Heart left ventricle (tissue), 16 donors: ENCODE measurements at regions of chr16 and their contacts with region 1.

Region 1: GRCh38 chr16:54929090-54930004 is 1.3 kb upstream of the IRX5 start:
- DNase-seq: peak; percentile 99 to 100 (median 100)
- ATAC-seq: peak; percentile 91 to 97 (median 93)
- H3K4me3 ChIP-seq: peak overlapping the region; percentile 60 to 86 (median 74)
- H3K27ac ChIP-seq: peak overlapping the region; percentile 79 to 96 (median 90)
- H3K4me1 ChIP-seq: peaks cover 0 to 39% (median 7%) of the 10 kb centered on the region in 12 donors
- H3K27me3 ChIP-seq: peaks cover 0 to 71% (median 26%) of the 10 kb centered on the region in 9 donors
- CTCF ChIP-seq: peak in 4 of 12 donors; percentile 23 to 47 (median 30)
- POLR2A ChIP-seq: peak; percentile 49 to 60

Region 2: GRCh38 chr16:53435066-53435688 is 1494.2 kb before region 1 on chr16:
- intact Hi-C with region 1: loop called in 1 of 10 experiments (anchors 10 kb)
- DNase-seq: peak; percentile 66 to 78 (median 70)
- ATAC-seq: peak; percentile 91 to 96 (median 92)
- H3K4me3 ChIP-seq: peak overlapping the region; percentile 76 to 100 (median 94)
- H3K27ac ChIP-seq: peak overlapping the region; percentile 84 to 98 (median 95)
- H3K4me1 ChIP-seq: peaks cover 0 to 26% (median 14%) of the 10 kb centered on the region in 12 donors
- H3K27me3 ChIP-seq: no peaks in the 10 kb centered on the region
- CTCF ChIP-seq: no peak
- POLR2A ChIP-seq: peak in 1 of 2 donors; percentile 59

Region 3: DNA sequence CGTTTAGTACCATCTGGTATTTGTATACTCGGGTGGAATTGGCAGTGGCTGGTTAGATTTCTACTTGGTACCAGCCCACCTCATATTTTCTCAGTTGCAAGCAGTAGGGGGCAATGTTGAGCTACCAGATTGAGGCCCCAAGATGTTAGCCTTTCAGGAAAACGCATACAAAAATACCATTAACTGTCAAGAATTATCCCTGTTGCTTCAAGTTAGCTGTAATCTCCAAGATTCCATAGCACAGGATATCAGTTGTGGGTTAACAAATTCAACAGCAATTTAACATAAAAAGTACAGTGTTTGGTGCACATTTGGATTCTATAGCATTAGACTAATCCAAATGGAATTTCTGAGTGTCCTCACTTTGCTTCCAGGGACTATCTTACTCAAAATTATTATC is 1037.2 kb before region 1 on chr16:
- intact Hi-C with region 1: loop called in 3 of 10 experiments (anchors 5 to 10 kb)
- DNase-seq: peak in 2 of 5 donors; percentile 32 to 48
- ATAC-seq: peak in 3 of 4 donors; percentile 66 to 74 (median 69)
- H3K4me3 ChIP-seq: no peak overlapping the region
- H3K27ac ChIP-seq: no peak overlapping the region
- H3K4me1 ChIP-seq: peaks cover 3 to 45% (median 24%) of the 10 kb centered on the region in 12 donors
- H3K27me3 ChIP-seq: no peaks in the 10 kb centered on the region
- CTCF ChIP-seq: peak; percentile 59 to 83 (median 74)
- POLR2A ChIP-seq: no peak

Region 4: GRCh38 chr16:54407596-54407995 is 521.8 kb before region 1 on chr16:
- intact Hi-C with region 1: loop called in 1 of 10 experiments (anchors 5 kb)
- DNase-seq: no peak
- ATAC-seq: no peak
- H3K4me3 ChIP-seq: no peak overlapping the region
- H3K27ac ChIP-seq: no peak overlapping the region
- H3K4me1 ChIP-seq: peaks cover 0 to 21% (median 11%) of the 10 kb centered on the region in 12 donors
- H3K27me3 ChIP-seq: peaks cover 0 to 3% (median 0%) of the 10 kb centered on the region in 9 donors
- CTCF ChIP-seq: no peak
- POLR2A ChIP-seq: no peak

Region 5: GRCh38 chr16:54526916-54527315 is 402.4 kb before region 1 on chr16:
- intact Hi-C with region 1: loop called in 1 of 10 experiments (anchors 10 kb)
- DNase-seq: no peak
- ATAC-seq: no peak
- H3K4me3 ChIP-seq: no peak overlapping the region
- H3K27ac ChIP-seq: no peak overlapping the region
- H3K4me1 ChIP-seq: peaks cover 0 to 36% (median 5%) of the 10 kb centered on the region in 12 donors
- H3K27me3 ChIP-seq: no peaks in the 10 kb centered on the region
- CTCF ChIP-seq: no peak
- POLR2A ChIP-seq: no peak

Region 6: DNA sequence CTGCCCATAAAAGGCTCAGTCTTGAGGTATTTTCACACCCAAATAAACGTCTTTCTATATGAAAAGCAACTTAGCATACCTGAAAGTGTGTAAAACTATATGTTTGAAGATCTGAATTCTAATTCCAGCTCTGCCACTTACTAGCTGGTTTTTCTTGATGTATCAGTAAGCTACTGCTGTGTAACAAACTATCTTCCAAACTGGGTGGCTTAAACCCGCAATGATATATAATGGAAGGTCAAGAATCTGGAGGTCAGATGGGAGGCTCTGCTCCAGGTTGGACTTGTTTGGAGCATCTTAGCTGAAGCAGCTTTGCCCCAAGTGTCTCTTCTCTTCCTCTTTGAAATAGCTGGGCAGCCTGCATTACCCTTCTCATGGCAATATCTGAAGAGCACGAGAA is 163.0 kb before region 1 on chr16:
- intact Hi-C with region 1: no loop called
- DNase-seq: no peak
- ATAC-seq: no peak
- H3K4me3 ChIP-seq: no peak overlapping the region
- H3K27ac ChIP-seq: no peak overlapping the region
- H3K4me1 ChIP-seq: no peaks in the 10 kb centered on the region
- H3K27me3 ChIP-seq: no peaks in the 10 kb centered on the region
- CTCF ChIP-seq: no peak
- POLR2A ChIP-seq: no peak

Region 7: GRCh38 chr16:54817446-54817845 is 111.9 kb before region 1 on chr16:
- intact Hi-C with region 1: loop called in 4 of 10 experiments (anchors 5 kb)
- DNase-seq: peak in 2 of 5 donors; percentile 8 to 33
- ATAC-seq: peak in 3 of 4 donors; percentile 47 to 69 (median 69)
- H3K4me3 ChIP-seq: no peak overlapping the region
- H3K27ac ChIP-seq: no peak overlapping the region
- H3K4me1 ChIP-seq: peaks cover 0 to 6% (median 0%) of the 10 kb centered on the region in 12 donors
- H3K27me3 ChIP-seq: peaks cover 0 to 7% (median 0%) of the 10 kb centered on the region in 9 donors
- CTCF ChIP-seq: peak in 9 of 12 donors; percentile 6 to 55 (median 42)
- POLR2A ChIP-seq: no peak

Region 8: DNA sequence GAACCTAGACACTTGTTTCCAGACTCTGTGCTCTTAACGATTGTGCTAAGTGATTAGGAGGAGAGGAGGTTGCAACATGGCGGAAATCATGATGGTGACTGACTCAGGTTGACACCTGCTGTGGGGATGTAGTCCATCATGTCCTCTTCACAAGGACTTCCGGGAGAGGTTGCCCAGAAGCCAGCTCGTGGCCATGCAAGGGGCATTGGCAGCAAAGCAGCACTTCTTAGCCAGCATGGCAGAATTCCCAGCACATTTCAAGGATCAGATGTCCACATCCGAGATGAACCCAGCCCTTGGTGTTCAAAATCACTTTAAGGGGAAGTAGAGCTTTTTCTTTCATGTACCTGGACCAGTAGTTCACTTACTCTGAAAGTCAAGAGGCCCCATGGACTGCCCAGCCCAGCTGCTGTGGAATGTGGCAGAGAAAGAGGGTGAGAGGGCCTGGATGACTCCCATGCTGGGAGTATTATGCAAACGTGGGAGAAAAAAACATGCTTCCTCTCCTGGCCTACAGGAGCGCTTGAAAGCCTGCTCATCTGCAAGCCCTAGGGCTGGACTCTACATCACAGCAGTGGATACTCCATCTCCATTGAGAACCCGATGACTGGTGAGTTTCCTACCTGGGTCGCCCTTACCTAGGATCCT is 460.2 kb after region 1 on chr16:
- intact Hi-C with region 1: loop called in 1 of 10 experiments (anchors 5 kb)
- DNase-seq: peak in 4 of 5 donors; percentile 56 to 84 (median 68)
- ATAC-seq: peak; percentile 59 to 78 (median 67)
- H3K4me3 ChIP-seq: peak overlapping the region in 3 of 12 donors; percentile 29 to 41 (median 38)
- H3K27ac ChIP-seq: peak overlapping the region; percentile 12 to 98 (median 72)
- H3K4me1 ChIP-seq: peaks cover 0 to 57% (median 7%) of the 10 kb centered on the region in 12 donors
- H3K27me3 ChIP-seq: no peaks in the 10 kb centered on the region
- CTCF ChIP-seq: no peak
- POLR2A ChIP-seq: no peak